Dendritic cell treated with granulocyte-macrophage colony-stimulating factor and Interleukin-4, amounts not matched to agents 40 ng/mL and 50 ng/mL, for 4 days (primary cell): ENCODE measurements at regions of chr9 and their contacts with region 1.

Region 1: DNA sequence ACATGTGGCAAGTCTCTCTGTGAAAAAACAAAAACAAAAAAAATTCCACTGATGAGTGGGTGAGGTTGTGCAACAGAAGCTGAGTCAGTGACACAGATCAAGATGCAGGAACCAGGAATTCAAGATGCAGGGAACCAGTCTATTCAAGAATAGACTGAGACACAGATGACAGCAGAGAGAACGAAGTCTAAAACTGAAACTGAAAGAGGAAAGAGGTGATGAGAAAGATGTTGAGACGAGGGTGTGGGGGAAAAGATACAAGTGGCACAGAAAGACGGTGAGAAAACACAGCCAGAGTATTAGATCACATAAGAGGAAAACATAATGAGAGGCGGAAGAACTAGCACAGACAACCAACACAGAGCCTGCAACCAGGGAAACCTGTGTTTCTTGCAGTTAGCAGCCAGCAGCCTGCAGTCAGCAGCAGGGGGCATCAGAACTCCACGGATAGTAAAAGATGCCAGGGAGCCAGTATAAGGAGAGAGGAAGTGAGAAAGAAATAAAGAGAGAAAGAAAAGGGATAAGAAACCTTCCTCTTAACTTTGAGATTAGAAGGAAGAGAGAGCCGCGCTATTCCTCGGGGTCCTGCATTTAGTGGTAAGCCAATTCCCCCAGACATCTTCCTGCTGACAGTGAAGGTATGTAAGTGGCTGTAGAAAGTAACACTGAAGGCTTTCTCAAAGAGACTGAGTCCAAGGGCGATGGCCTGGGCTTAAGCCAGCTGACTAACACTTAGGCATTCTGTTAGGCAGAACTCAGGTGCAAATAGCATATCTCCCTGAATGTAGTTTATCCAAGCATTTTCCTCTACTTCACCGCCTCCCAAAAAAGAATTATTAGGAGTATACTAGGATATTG is 79.0 kb downstream of the TLR4 start:
- H3K4me3 Mint-ChIP-seq: no peak overlapping the region
- H3K27ac Mint-ChIP-seq: no peak overlapping the region
- H3K4me1 Mint-ChIP-seq: peaks cover 39% of the 10 kb centered on the region
- H3K27me3 Mint-ChIP-seq: peaks cover 2% of the 10 kb centered on the region

Region 2: DNA sequence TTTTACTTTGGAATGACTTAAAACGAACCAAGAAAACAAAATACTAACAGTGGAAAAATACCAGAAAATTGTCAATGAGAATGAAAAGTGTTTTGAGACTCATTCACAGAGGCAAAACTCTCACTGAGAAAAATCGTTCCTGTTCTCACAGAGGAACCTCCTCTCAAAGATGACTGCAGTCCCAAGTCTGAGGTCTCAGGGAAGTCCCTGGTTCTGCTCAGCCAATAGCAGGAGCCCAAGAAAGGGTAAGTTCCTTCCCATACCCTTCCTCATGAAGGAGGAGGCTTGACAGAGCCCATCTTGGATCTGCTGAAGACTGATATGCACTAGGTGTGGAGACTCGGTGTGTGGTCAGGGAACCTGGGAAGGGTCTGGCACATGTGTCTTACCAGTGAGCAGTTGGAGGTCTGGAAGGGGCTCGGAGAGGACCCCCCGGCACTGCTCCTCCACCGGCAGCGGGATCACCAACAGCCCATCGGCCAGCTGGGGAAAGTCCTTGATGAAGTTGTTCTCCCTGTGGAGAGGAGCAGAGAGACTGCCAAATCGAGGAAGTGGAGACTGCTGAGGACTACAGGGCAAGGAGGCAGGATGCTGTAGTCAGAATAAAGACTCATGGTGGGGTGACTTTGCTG is 1050.0 kb before region 1 on chr9:
- intact Hi-C with region 1: no loop called
- H3K4me3 Mint-ChIP-seq: no peak overlapping the region
- H3K27ac Mint-ChIP-seq: no peak overlapping the region
- H3K4me1 Mint-ChIP-seq: peaks cover 25% of the 10 kb centered on the region
- H3K27me3 Mint-ChIP-seq: peaks cover 10% of the 10 kb centered on the region

Region 3: GRCh38 chr9:117704024-117704575 is 79.1 kb before region 1 on chr9 and contains the start of gene TLR4:
- intact Hi-C with region 1: loop called (anchors 2 kb)
- H3K4me3 Mint-ChIP-seq: peak within 1 kb of the TSS; percentile 98
- H3K27ac Mint-ChIP-seq: peak within 1 kb of the TSS; percentile 98
- H3K4me1 Mint-ChIP-seq: peaks cover 67% of the 10 kb centered on the region
- H3K27me3 Mint-ChIP-seq: no peaks in the 10 kb centered on the region

Region 4: GRCh38 chr9:117744856-117745389 is 38.2 kb before region 1 on chr9:
- intact Hi-C with region 1: loop called (anchors 5 kb)
- H3K4me3 Mint-ChIP-seq: peak overlapping the region; percentile 72
- H3K27ac Mint-ChIP-seq: peak overlapping the region; percentile 78
- H3K4me1 Mint-ChIP-seq: peaks cover 25% of the 10 kb centered on the region
- H3K27me3 Mint-ChIP-seq: peaks cover 23% of the 10 kb centered on the region

Region 5: GRCh38 chr9:117772960-117773359 is 10.2 kb before region 1 on chr9:
- intact Hi-C with region 1: no loop called
- H3K4me3 Mint-ChIP-seq: no peak overlapping the region
- H3K27ac Mint-ChIP-seq: no peak overlapping the region
- H3K4me1 Mint-ChIP-seq: peaks cover 44% of the 10 kb centered on the region
- H3K27me3 Mint-ChIP-seq: peaks cover 2% of the 10 kb centered on the region

Region 6: GRCh38 chr9:117869287-117869686 is 86.1 kb after region 1 on chr9:
- intact Hi-C with region 1: loop called (anchors 2 kb)
- H3K4me3 Mint-ChIP-seq: no peak overlapping the region
- H3K27ac Mint-ChIP-seq: no peak overlapping the region
- H3K4me1 Mint-ChIP-seq: peaks cover 13% of the 10 kb centered on the region
- H3K27me3 Mint-ChIP-seq: peaks cover 33% of the 10 kb centered on the region